PC-3 (cell line): ENCODE measurements at regions of chr2 and their contacts with region 1.

Region 1: GRCh38 chr2:207683879-207684627 is 27.4 kb upstream of the CCNYL1 start:
- DNase-seq: peak; percentile 96
- ATAC-seq: peak; percentile 87
- H3K4me3 ChIP-seq: peak overlapping the region; percentile 9; the same call in 1 of the 2 replicates
- H3K27ac ChIP-seq: peak overlapping the region; percentile 94
- H3K4me1 ChIP-seq: peaks cover 23% of the 10 kb centered on the region
- H3K27me3 ChIP-seq: no peaks in the 10 kb centered on the region
- CTCF ChIP-seq: no peak

Region 2: GRCh38 chr2:207662203-207662602 is 21.9 kb before region 1 on chr2:
- CTCF ChIA-PET with region 1: no interaction called
- POLR2A ChIA-PET with region 1: no interaction called
- intact Hi-C with region 1: loop called (anchors 1 kb)
- DNase-seq: no peak
- ATAC-seq: no peak
- H3K4me3 ChIP-seq: no peak overlapping the region
- H3K27ac ChIP-seq: no peak overlapping the region
- H3K4me1 ChIP-seq: peaks cover 6% of the 10 kb centered on the region
- H3K27me3 ChIP-seq: no peaks in the 10 kb centered on the region
- CTCF ChIP-seq: no peak